GM12878 (cell line): ENCODE measurements at regions of chr17 and their contacts with region 1.

Region 1: GRCh38 chr17:47229535-47230443 is 20.6 kb downstream of the MYL4 start:
- DNase-seq: peak; percentile 75
- ATAC-seq: peak; percentile 84
- H3K4me3 ChIP-seq: peak overlapping the region; percentile 37; the same call in 1 of the 2 replicates
- H3K27ac ChIP-seq: no peak overlapping the region
- H3K4me1 ChIP-seq: peaks cover 18% of the 10 kb centered on the region
- H3K27me3 ChIP-seq: no peaks in the 10 kb centered on the region; a peak in 1 of 4 replicates
- CTCF ChIP-seq: peak; percentile 99 to 100 (median 100); a peak in 5 of 6 replicates
- EP300 ChIP-seq: no peak
- POLR2A ChIP-seq: no peak
- RAD21 ChIP-seq: peak; percentile 100

Region 2: GRCh38 chr17:47188876-47189731 is 40.7 kb before region 1 on chr17 and contains the start of gene CDC27:
- CTCF ChIA-PET with region 1: interaction called, 3 read pairs
- POLR2A ChIA-PET with region 1: interaction called, 3 read pairs
- RAD21 ChIA-PET with region 1: interaction called, 5 read pairs
- SMC1A ChIA-PET with region 1: interaction called, 10 read pairs
- in situ Hi-C with region 1: no loop called
- intact Hi-C with region 1: no loop called
- DNase-seq: peak; percentile 88
- ATAC-seq: peak; percentile 93
- H3K4me3 ChIP-seq: peak within 1 kb of the TSS; percentile 89
- H3K27ac ChIP-seq: peak within 1 kb of the TSS; percentile 96
- H3K4me1 ChIP-seq: peaks cover 4% of the 10 kb centered on the region
- H3K27me3 ChIP-seq: no peaks in the 10 kb centered on the region
- CTCF ChIP-seq: no peak
- EP300 ChIP-seq: no peak
- POLR2A ChIP-seq: peak; percentile 73
- RAD21 ChIP-seq: no peak
- polyA plus RNA-seq, gene CDC27: 23.2 to 27.2 TPM

Region 3: DNA sequence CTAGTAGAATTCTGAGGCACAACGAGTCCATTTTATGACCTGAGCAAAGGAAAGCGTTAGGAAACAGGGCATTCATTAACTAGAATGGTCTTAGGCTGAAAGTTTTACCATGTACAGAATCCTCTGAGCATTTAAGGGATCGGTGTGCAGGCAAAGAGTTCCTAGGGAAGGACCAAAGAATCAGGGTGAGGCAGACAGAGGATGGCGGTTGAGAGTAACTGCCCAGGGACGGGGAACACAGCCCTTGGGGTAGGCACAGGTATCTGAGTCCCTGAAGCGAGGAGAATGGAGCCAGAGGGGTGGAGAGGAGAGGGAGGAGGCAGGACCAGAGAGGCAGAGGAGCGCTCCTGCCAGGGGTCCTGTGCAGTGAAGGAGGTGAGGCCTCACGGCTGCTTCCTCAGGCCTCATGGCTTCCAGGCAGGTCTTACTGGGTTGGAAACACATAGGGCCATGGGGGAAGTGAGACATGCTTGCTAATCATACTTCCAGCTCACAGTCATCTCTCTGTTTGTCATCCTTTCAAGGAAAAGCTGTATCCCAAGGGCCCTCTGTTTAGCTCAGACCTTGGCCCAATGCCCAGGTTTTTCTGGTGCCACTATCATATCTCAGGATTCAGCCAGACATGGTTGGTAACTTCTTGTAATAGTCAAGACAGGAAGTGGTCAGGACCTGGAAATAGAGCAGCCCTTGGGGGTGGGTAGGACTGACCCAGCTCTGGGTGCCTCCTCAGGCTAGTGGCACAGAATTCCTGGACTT is 10.0 kb after region 1 on chr17:
- CTCF ChIA-PET with region 1: interaction called, 16 read pairs
- POLR2A ChIA-PET with region 1: interaction called, 3 read pairs
- RAD21 ChIA-PET with region 1: interaction called, 12 read pairs
- SMC1A ChIA-PET with region 1: interaction called, 13 read pairs
- in situ Hi-C with region 1: no loop called
- intact Hi-C with region 1: no loop called
- DNase-seq: peak; percentile 40
- ATAC-seq: peak; percentile 88
- H3K4me3 ChIP-seq: no peak overlapping the region
- H3K27ac ChIP-seq: no peak overlapping the region
- H3K4me1 ChIP-seq: peaks cover 10% of the 10 kb centered on the region
- H3K27me3 ChIP-seq: no peaks in the 10 kb centered on the region
- CTCF ChIP-seq: no peak
- EP300 ChIP-seq: no peak
- POLR2A ChIP-seq: no peak
- RAD21 ChIP-seq: no peak

Region 4: DNA sequence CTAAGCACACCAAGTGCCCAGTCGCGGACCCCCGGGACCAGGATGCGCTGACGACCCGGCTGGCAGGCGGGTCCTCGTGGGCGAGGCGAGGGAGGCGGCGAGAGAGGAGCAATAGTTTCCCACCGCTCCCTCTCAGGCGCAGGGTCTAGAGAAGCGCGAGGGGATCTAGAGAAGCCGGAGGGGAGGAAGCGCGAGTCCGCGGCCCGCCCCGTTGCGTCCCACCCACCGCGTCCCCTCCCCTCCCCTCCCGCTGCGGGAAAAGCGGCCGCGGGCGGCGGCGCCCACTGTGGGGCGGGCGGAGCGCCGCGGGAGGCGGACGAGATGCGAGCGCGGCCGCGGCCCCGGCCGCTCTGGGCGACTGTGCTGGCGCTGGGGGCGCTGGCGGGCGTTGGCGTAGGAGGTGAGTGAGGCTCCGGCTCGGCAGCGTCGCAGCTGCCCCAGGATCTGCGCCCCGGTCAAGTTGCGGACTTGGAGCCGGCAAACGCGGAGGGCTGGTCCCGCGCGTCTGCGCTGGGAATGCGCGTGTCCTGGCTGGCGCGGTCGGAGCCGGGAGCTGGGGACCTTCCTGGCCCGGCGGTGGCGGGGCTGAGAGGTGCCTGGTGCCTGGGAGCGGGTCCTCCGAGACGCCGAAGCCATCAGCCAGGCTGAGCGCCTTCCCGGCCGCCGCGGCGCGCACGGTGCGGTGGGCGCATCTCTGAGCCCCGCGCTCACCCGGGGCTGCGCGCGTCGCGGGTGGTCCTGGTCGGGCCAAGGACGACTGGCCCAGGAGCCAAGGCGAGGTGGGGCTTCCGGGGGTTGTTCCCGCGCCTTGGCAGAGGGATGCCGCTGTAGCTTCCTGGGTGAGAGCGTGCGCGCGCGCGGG is 24.0 kb after region 1 on chr17 and contains the start of gene ITGB3:
- CTCF ChIA-PET with region 1: interaction called, 18 read pairs
- POLR2A ChIA-PET with region 1: interaction called, 3 read pairs
- RAD21 ChIA-PET with region 1: interaction called, 11 read pairs
- SMC1A ChIA-PET with region 1: interaction called, 9 read pairs
- in situ Hi-C with region 1: no loop called
- intact Hi-C with region 1: loop called (anchors 2 kb)
- DNase-seq: no peak
- ATAC-seq: peak; percentile 93
- H3K4me3 ChIP-seq: peak within 1 kb of the TSS; percentile 81
- H3K27ac ChIP-seq: no peak within 1 kb of the TSS
- H3K4me1 ChIP-seq: no peaks in the 10 kb centered on the region; the same call in 1 of the 2 replicates
- H3K27me3 ChIP-seq: no peaks in the 10 kb centered on the region
- CTCF ChIP-seq: peak; percentile 56 to 64 (median 56); a peak in 5 of 6 replicates
- EP300 ChIP-seq: no peak
- POLR2A ChIP-seq: peak; percentile 34; the same call in 1 of the 2 replicates
- RAD21 ChIP-seq: peak; percentile 50
- polyA plus RNA-seq, gene ITGB3: 0.69 to 1.4 TPM

Region 5: GRCh38 chr17:47279062-47279736 is 49.4 kb after region 1 on chr17:
- CTCF ChIA-PET with region 1: interaction called, 15 read pairs
- POLR2A ChIA-PET with region 1: interaction called, 3 read pairs
- RAD21 ChIA-PET with region 1: interaction called, 32 read pairs
- SMC1A ChIA-PET with region 1: interaction called, 110 read pairs
- in situ Hi-C with region 1: no loop called
- intact Hi-C with region 1: loop called (anchors 2 kb)
- DNase-seq: peak; percentile 92
- ATAC-seq: peak; percentile 91
- H3K4me3 ChIP-seq: peak overlapping the region; percentile 57
- H3K27ac ChIP-seq: peak overlapping the region; percentile 79
- H3K4me1 ChIP-seq: peaks cover 40% of the 10 kb centered on the region
- H3K27me3 ChIP-seq: no peaks in the 10 kb centered on the region
- CTCF ChIP-seq: no peak
- EP300 ChIP-seq: peak; percentile 19 to 70; a peak in 2 of 4 replicates
- POLR2A ChIP-seq: no peak
- RAD21 ChIP-seq: no peak; the same call in 1 of the 2 replicates

Region 6: GRCh38 chr17:47297661-47298615 is 68.1 kb after region 1 on chr17:
- CTCF ChIA-PET with region 1: interaction called, 18 read pairs
- POLR2A ChIA-PET with region 1: no interaction called
- RAD21 ChIA-PET with region 1: interaction called, 3 read pairs
- SMC1A ChIA-PET with region 1: interaction called, 4 read pairs
- in situ Hi-C with region 1: no loop called
- intact Hi-C with region 1: no loop called
- DNase-seq: no peak
- ATAC-seq: no peak
- H3K4me3 ChIP-seq: no peak overlapping the region
- H3K27ac ChIP-seq: no peak overlapping the region
- H3K4me1 ChIP-seq: no peaks in the 10 kb centered on the region
- H3K27me3 ChIP-seq: no peaks in the 10 kb centered on the region
- CTCF ChIP-seq: no peak
- EP300 ChIP-seq: no peak
- POLR2A ChIP-seq: no peak
- RAD21 ChIP-seq: no peak

Region 7: GRCh38 chr17:47323382-47324222 is 93.8 kb after region 1 on chr17 and contains the start of gene EFCAB13:
- CTCF ChIA-PET with region 1: interaction called, 32 read pairs
- POLR2A ChIA-PET with region 1: interaction called, 3 read pairs
- RAD21 ChIA-PET with region 1: interaction called, 15 read pairs
- SMC1A ChIA-PET with region 1: interaction called, 10 read pairs
- in situ Hi-C with region 1: no loop called
- intact Hi-C with region 1: no loop called
- DNase-seq: peak; percentile 54
- ATAC-seq: peak; percentile 95
- H3K4me3 ChIP-seq: peak within 1 kb of the TSS; percentile 76
- H3K27ac ChIP-seq: peak within 1 kb of the TSS; percentile 91
- H3K4me1 ChIP-seq: peaks cover 10% of the 10 kb centered on the region; the same call in 1 of the 2 replicates
- H3K27me3 ChIP-seq: no peaks in the 10 kb centered on the region
- CTCF ChIP-seq: 0 out of 6 replicates have a peak, but pooled peaks of 1 of the 3 experiments have one; percentile 17
- EP300 ChIP-seq: no peak; a peak in 1 of 4 replicates
- POLR2A ChIP-seq: peak; percentile 92
- RAD21 ChIP-seq: no peak
- polyA plus RNA-seq, gene EFCAB13: 0.90 to 1.9 TPM

Region 8: GRCh38 chr17:48625495-48626244 is 1395.9 kb after region 1 on chr17:
- CTCF ChIA-PET with region 1: no interaction called
- POLR2A ChIA-PET with region 1: no interaction called
- RAD21 ChIA-PET with region 1: no interaction called
- SMC1A ChIA-PET with region 1: no interaction called
- in situ Hi-C with region 1: no loop called
- intact Hi-C with region 1: no loop called
- DNase-seq: no peak
- ATAC-seq: peak; percentile 87
- H3K4me3 ChIP-seq: peak overlapping the region; percentile 65
- H3K27ac ChIP-seq: no peak overlapping the region
- H3K4me1 ChIP-seq: no peaks in the 10 kb centered on the region
- H3K27me3 ChIP-seq: peaks cover 36% of the 10 kb centered on the region in 2 experiments
- CTCF ChIP-seq: no peak
- EP300 ChIP-seq: no peak
- POLR2A ChIP-seq: no peak
- RAD21 ChIP-seq: no peak